Gastrocnemius medialis (tissue), 4 donors: ENCODE measurements at regions of chr5 and their contacts with region 1.

Region 1: DNA sequence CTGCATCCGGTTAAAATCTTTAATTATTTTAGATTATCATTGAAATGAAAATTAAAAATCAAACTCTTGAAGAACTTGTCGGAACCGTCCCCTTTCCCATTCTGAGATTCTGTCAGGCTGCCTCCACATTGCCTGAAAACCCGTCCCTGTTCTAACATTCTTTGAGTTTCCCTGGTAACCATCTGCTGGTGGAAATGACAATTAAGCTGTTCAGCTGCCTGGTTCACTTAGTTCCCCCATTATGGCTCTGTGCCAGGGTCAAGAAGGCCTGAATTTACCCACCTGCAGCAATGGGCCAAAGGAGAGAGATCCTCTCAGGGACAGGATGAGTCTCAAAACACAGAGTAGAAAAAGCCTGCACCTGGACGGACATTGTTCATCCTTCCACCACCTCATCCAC is 11.8 kb upstream of the TCOF1 start:
- DNase-seq: no peak
- ATAC-seq: no peak
- H3K4me3 ChIP-seq: no peak overlapping the region
- H3K27ac ChIP-seq: no peak overlapping the region
- H3K4me1 ChIP-seq: peaks cover 1 to 2% of the 10 kb centered on the region in 2 donors
- H3K27me3 ChIP-seq: no peaks in the 10 kb centered on the region
- CTCF ChIP-seq: no peak
- POLR2A ChIP-seq: no peak

Region 2: DNA sequence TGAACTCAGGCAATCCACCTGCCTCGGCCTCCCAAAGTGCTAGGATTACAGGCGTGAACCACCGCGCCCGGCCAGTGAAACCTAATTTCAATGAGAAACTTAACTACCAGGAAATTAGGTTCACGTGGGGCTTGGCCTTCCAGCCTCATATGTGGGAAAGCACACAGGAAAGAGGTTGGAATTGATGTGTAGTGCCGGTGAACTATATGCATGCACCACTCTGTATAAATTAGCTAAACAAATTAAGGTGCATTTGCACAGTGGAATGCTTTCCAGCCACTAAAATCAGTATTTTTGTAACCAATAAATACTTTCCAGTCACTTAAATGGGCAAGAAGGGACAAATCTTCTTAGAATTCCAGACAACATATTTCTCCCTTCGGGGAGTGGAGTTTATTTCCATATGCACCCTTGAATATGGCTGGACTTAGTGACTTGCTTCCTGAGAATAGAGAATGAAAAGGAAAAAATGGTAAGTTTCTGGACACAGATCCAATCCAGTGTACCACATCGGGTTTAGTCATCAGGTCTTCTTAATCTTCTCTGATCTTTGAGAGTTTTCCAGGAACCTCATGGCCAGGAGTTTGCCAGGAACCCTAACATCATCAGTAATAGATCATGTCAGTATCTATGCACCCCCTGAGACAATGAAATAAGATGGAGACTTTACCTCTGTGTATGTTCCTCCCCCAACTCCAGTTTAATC is 1387.8 kb after region 1 on chr5:
- in situ Hi-C with region 1: no loop called
- intact Hi-C with region 1: loop called (anchors 5 kb)
- DNase-seq: no peak
- ATAC-seq: no peak
- H3K4me3 ChIP-seq: no peak overlapping the region
- H3K27ac ChIP-seq: no peak overlapping the region
- H3K4me1 ChIP-seq: no peaks in the 10 kb centered on the region
- H3K27me3 ChIP-seq: no peaks in the 10 kb centered on the region
- CTCF ChIP-seq: no peak
- POLR2A ChIP-seq: no peak